Gastrocnemius medialis (tissue), 4 donors: ENCODE measurements at regions of chr17 and their contacts with region 1.

Region 1: GRCh38 chr17:70552230-70552981 is 383.1 kb downstream of the KCNJ2 start:
- DNase-seq: peak in 1 of 2 donors; percentile 3
- ATAC-seq: peak in 1 of 2 donors; percentile 73
- H3K4me3 ChIP-seq: no peak overlapping the region
- H3K27ac ChIP-seq: no peak overlapping the region
- H3K4me1 ChIP-seq: no peaks in the 10 kb centered on the region
- H3K27me3 ChIP-seq: no peaks in the 10 kb centered on the region
- CTCF ChIP-seq: peak in 4 of 5 experiments; percentile 50 to 62 (median 58)
- POLR2A ChIP-seq: no peak

Region 2: GRCh38 chr17:69567130-69567529 is 985.3 kb before region 1 on chr17:
- in situ Hi-C with region 1: loop called in 3 of 4 experiments (anchors 5 to 10 kb)
- intact Hi-C with region 1: loop called (anchors 5 kb)
- DNase-seq: no peak
- ATAC-seq: no peak
- H3K4me3 ChIP-seq: no peak overlapping the region
- H3K27ac ChIP-seq: no peak overlapping the region
- H3K4me1 ChIP-seq: peaks cover 3 to 5% of the 10 kb centered on the region in 2 donors
- H3K27me3 ChIP-seq: no peaks in the 10 kb centered on the region
- CTCF ChIP-seq: no peak
- POLR2A ChIP-seq: no peak

Region 3: DNA sequence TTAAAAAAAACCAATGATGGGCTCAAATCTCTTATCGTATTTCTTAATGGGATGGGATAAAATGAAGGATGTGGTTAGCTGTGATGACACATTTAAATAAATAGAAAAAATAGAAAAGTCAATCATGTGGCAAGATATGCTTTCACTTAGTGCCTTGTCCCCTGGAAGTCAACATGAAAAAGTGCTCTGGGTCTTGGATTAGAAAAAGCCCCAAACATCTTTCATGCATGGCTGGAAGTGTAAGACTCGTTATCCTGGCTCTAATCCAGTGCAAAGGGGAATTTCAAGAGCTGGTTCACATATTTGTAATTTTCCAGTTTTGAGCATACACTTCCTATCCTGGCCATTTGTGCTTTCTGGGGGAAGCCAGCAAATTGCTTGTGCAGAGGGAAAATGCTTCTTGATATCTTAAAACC is 977.1 kb before region 1 on chr17:
- in situ Hi-C with region 1: loop called in 3 of 4 experiments (anchors 5 to 25 kb)
- intact Hi-C with region 1: no loop called
- DNase-seq: no peak
- ATAC-seq: peak; percentile 13 to 23
- H3K4me3 ChIP-seq: no peak overlapping the region
- H3K27ac ChIP-seq: peak overlapping the region in 1 of 4 donors; percentile 56
- H3K4me1 ChIP-seq: peaks cover 0 to 12% of the 10 kb centered on the region in 2 donors
- H3K27me3 ChIP-seq: no peaks in the 10 kb centered on the region
- CTCF ChIP-seq: no peak
- POLR2A ChIP-seq: no peak

Region 4: GRCh38 chr17:69581061-69581961 is 971.1 kb before region 1 on chr17:
- in situ Hi-C with region 1: loop called in 2 of 4 experiments (anchors 10 to 25 kb)
- intact Hi-C with region 1: no loop called
- DNase-seq: no peak
- ATAC-seq: no peak
- H3K4me3 ChIP-seq: peak overlapping the region in 3 of 4 donors; percentile 21 to 31 (median 24)
- H3K27ac ChIP-seq: peak overlapping the region in 1 of 4 donors; percentile 15
- H3K4me1 ChIP-seq: peaks cover 0 to 4% of the 10 kb centered on the region in 2 donors
- H3K27me3 ChIP-seq: no peaks in the 10 kb centered on the region
- CTCF ChIP-seq: no peak
- POLR2A ChIP-seq: no peak

Region 5: DNA sequence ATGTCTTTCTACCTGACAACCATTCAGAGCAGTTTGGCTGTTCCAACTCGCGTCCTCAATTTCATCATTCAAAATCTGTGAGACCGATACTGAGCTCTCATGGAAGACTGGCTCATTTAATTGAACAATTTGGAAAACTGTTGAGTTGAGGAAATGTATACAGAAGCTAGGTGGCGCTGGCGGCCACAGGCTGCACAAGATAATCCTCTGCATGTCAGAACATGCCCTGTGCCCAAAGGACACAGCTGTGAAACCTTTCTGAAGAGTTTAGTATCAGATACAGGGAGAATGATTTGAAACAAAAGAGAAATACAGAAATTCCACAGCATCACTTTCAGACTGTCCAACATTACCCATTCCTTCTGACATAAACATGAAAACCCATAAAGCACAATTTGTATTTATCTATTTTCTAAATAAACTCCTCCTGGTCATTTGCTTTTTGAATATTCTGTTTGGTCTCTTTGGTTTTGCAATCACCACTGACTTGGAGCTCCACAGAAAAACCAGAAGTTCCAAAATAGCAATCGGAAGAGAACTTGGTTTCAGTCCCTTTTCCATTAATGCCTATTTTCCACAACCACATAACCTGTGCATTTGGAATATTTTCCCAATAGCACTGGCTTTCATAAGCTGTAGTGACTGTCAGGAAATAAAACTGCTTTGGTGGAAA is 945.1 kb before region 1 on chr17:
- in situ Hi-C with region 1: no loop called
- intact Hi-C with region 1: loop called (anchors 5 kb)
- DNase-seq: peak; percentile 55 to 75
- ATAC-seq: peak; percentile 60 to 88
- H3K4me3 ChIP-seq: no peak overlapping the region
- H3K27ac ChIP-seq: peak overlapping the region; percentile 69 to 80 (median 72)
- H3K4me1 ChIP-seq: peaks cover 27 to 35% of the 10 kb centered on the region in 2 donors
- H3K27me3 ChIP-seq: no peaks in the 10 kb centered on the region
- CTCF ChIP-seq: peak; percentile 78 to 94 (median 86)
- POLR2A ChIP-seq: no peak

Region 6: DNA sequence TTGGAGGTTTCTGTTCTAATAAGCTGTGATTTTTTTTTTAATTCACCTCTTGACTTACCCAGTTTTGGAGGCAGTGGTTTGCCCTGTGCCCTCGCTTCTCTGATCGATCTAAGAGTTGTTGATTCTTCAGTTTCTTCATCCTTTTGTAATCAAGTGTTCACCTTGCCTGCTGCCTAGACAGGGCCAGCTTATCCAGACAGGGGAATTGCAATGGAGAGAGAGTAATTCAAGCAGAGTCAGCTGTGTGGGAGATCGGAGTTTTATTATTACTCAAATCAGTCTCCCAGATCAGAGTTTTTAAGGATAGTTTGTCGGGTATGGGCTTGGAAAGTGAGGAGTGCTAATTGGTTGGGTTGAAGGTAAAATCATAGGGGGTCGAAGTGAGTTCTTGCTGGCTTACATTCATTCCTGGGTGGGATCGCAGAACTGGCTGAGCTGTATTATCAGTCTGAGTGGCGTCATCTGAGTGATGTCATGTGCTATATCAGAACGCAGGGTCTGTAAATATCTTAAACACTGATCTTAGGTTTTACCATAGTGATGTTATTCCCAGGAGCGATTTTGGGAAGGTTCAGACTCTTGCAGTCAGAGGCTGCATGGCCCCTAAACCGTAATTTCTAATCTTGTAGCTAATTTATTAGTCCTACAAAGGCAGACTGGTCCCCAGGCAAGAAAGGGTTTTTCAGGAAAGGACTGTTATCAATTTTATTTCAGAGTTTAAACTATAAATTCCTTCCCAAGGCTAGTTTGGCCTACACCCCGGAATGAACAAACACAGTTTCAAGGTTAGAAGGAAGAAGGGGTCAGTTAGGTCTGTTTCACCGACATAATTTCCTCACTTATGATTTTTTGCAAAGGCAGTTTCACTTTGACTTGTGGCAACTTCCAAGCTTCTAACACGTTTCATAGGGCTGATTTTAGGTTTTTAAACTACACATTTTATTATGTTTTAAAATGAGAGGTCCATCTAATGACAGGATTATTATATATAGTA is 498.9 kb before region 1 on chr17:
- in situ Hi-C with region 1: no loop called
- intact Hi-C with region 1: no loop called
- DNase-seq: no peak
- ATAC-seq: peak in 1 of 2 donors; percentile 70
- H3K4me3 ChIP-seq: peak overlapping the region; percentile 5 to 42 (median 39)
- H3K27ac ChIP-seq: peak overlapping the region in 3 of 4 donors; percentile 28 to 47 (median 36)
- H3K4me1 ChIP-seq: peaks cover 18 to 22% of the 10 kb centered on the region in 2 donors
- H3K27me3 ChIP-seq: no peaks in the 10 kb centered on the region
- CTCF ChIP-seq: no peak
- POLR2A ChIP-seq: no peak

Region 7: DNA sequence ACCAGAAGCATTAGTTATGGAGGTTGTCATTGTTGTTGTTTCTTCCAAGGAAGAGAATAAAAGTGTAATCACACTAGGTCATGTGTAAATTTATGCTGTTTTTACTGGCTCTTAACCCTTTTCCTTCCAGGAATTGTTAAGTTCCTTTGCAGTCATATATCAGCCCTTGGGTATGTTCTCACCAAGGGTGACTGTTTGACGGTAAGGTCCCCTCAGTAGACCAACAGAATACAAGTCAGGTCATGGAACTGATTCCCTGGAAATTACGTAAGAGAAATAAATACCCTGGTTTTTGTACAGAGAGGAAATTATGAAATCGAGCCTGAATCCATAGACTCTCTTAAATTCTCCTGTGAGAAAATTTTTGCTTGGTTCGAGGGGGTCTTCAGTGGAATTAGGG is 394.2 kb before region 1 on chr17:
- in situ Hi-C with region 1: loop called in 1 of 4 experiments (anchors 10 kb)
- intact Hi-C with region 1: no loop called
- DNase-seq: no peak
- ATAC-seq: no peak
- H3K4me3 ChIP-seq: no peak overlapping the region
- H3K27ac ChIP-seq: no peak overlapping the region
- H3K4me1 ChIP-seq: no peaks in the 10 kb centered on the region
- H3K27me3 ChIP-seq: no peaks in the 10 kb centered on the region
- CTCF ChIP-seq: no peak
- POLR2A ChIP-seq: no peak

Region 8: GRCh38 chr17:70420861-70421449 is 131.5 kb before region 1 on chr17:
- in situ Hi-C with region 1: no loop called
- intact Hi-C with region 1: no loop called
- DNase-seq: no peak
- ATAC-seq: no peak
- H3K4me3 ChIP-seq: no peak overlapping the region
- H3K27ac ChIP-seq: no peak overlapping the region
- H3K4me1 ChIP-seq: peaks cover 5% of the 10 kb centered on the region in 2 donors
- H3K27me3 ChIP-seq: no peaks in the 10 kb centered on the region
- CTCF ChIP-seq: no peak
- POLR2A ChIP-seq: no peak